ENCODE measurements at regions of chr1 and their contacts with region 1.

Region 1: DNA sequence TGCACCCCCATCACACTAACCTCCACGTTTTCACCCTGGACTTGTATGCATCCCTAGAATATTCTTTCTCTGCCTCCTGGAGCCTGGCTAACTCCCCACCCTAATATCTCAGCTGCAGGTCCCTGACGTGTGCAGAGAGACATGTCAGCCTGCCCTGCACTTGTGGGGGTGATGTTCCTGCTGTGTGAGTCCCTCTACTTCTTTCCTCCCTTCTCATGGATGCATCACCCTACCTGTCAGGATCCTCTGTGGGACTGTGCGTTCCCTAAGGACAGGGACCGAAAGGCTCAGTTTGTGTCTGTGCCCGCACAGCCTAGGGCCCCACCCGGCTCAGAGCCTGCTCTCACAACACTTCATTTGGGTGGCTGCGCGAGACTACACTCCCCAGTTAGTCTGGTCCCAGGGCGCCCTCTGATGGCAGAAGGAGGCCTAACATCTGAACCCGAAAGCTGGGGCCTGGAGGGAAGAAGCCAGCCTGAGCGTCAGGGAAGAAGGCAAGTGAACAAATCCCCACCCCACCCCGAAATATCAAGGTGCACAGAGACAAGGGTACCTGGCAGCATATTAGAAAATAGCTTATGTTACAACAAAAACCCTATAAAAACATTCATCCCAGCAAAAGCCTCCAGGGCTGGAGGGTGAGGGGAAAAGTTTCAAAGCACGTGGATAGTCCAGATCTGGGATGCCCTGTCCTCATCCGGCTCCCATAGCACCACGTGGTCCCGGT is 3.7 kb downstream of the CD52 start:
- DNase-seq: peak; percentile 99
- H3K4me3 Mint-ChIP-seq: peak overlapping the region; percentile 65
- H3K27ac Mint-ChIP-seq: peak overlapping the region; percentile 90
- H3K4me1 Mint-ChIP-seq: peaks cover 44% of the 10 kb centered on the region
- H3K27me3 Mint-ChIP-seq: no peaks in the 10 kb centered on the region

Region 2: DNA sequence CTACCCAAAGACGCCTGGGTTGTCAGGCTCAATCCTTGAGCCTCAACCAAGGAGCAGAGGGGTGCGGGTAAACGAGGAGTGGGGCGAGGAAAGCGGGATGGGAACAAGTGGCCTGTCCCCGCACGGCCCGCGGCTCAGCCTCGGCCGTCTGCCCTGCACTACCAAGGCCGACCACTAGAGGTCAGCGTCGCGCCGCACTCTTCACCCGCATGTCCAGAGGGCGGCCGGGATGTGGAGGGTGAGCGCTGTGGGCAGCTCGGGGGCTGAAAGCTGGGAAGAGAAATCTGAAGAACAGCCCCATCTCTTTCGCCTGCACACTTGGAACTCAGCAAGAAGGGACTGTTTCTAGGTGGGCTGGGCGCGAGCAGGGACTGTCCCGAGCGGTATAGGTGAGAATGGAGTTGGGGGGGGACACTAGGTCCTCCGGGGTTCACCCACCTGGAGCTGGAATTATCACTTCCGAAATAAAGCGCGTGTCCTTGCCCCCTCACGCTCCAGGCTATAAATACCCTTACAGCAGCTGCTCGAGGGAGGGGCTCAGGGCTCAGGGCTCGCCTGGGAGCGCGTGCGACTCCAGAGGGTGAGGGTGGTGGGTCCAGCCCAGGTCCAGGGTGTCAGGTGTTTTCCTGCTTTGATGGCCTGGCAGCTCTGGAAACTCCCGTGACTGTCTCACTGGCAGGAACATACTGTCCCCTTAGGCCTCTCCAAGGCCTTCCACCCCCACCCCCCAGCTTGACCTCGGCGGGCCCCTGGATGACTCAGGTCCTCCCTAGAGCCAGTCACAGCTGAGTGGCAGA is 285.3 kb before region 1 on chr1:
- CTCF ChIA-PET with region 1: no interaction called
- intact Hi-C with region 1: loop called (anchors 5 kb)
- DNase-seq: peak; percentile 78
- H3K4me3 Mint-ChIP-seq: peak overlapping the region; percentile 88
- H3K27ac Mint-ChIP-seq: no peak overlapping the region
- H3K4me1 Mint-ChIP-seq: peaks cover 13% of the 10 kb centered on the region
- H3K27me3 Mint-ChIP-seq: peaks cover 3% of the 10 kb centered on the region

Region 3: DNA sequence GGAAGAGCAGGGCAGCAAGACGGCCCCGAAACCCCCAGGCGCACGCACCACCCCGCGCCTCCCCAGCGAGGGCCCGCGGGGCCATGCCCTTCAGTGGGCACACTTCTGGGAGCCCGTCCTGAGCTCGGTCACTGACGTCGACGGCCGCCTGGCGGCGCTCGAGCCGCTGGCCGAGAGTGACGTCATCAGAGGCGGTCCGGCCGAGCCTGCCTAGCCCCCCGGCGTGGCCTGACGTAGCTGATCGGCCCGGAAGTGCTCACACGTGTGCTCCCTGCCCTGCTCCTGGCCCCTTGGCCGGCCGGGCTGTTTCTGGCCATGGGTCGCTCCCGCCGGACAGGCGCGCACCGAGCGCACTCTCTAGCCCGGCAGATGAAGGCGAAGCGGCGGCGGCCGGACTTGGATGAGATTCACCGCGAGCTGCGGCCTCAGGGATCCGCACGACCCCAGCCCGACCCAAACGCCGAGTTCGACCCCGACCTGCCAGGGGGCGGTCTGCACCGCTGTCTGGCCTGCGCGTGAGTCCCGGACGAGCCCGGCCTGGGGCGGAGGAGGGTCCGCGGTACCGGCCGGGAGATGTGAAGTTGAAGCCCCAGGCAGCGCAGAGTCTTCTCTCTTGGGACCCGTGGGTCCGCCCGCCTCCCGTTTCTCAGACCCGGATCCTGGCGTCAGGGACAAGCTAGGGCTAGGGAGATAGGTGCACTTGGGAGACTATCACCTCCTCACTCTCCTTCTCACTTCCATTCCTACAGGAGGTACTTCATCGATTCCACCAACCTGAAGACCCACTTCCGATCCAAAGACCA is 151.6 kb before region 1 on chr1 and contains the start of gene ZNF593:
- CTCF ChIA-PET with region 1: interaction called, 12 read pairs
- intact Hi-C with region 1: loop called (anchors 1 kb)
- DNase-seq: peak; percentile 89
- H3K4me3 Mint-ChIP-seq: peak within 1 kb of the TSS; percentile 78
- H3K27ac Mint-ChIP-seq: peak within 1 kb of the TSS; percentile 60
- H3K4me1 Mint-ChIP-seq: peaks cover 8% of the 10 kb centered on the region
- H3K27me3 Mint-ChIP-seq: no peaks in the 10 kb centered on the region
- total RNA-seq, gene ZNF593: 24.0 to 26.8 TPM

Region 4: DNA sequence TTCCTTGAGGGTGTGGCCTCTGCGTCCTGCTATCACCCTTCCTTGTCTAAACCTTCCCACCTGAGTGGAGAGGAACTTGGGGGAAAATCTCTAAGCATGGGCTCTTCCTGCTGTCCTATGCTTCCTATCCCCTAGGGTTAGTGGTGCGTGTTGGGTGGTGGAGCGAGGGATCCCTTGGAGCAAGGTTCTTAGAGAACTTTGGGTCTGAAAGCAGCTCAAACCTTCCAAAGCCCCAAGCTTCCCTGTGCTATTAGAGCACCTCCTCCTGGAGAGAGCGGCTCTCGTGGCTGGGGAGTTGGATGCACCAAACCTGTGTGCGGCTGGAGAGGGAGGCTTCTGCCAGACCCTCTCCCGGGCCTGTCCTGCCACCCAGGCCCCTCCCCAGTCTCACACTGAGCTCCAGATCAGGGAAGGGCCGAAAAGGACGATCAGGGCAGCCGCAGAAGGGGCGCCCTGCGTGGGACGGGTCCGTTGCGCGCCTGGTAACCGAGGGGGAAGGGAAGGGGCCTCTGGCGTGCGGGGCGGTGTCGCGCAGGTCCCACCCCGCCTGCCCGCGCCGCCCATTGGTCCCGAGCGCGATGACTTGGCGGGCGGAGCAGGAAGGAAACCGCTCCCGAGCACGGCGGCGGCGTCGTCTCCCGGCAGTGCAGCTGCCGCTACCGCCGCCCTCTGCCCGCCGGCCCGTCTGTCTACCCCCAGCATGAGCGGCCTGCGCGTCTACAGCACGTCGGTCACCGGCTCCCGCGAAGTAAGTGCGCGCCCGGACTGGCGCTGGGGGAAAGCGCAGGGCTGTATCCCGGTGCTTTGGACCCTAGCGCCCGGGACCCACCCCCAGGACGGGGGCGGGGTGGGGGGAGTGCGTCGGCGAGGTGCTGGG is 41.8 kb before region 1 on chr1 and contains the start of gene SH3BGRL3:
- CTCF ChIA-PET with region 1: interaction called, 210 read pairs
- intact Hi-C with region 1: loop called (anchors 1 kb)
- DNase-seq: peak; percentile 86
- H3K4me3 Mint-ChIP-seq: peak within 1 kb of the TSS; percentile 81
- H3K27ac Mint-ChIP-seq: peak within 1 kb of the TSS; percentile 87
- H3K4me1 Mint-ChIP-seq: peaks cover 87% of the 10 kb centered on the region
- H3K27me3 Mint-ChIP-seq: no peaks in the 10 kb centered on the region
- total RNA-seq, gene SH3BGRL3: 130 to 132 TPM

Region 5: DNA sequence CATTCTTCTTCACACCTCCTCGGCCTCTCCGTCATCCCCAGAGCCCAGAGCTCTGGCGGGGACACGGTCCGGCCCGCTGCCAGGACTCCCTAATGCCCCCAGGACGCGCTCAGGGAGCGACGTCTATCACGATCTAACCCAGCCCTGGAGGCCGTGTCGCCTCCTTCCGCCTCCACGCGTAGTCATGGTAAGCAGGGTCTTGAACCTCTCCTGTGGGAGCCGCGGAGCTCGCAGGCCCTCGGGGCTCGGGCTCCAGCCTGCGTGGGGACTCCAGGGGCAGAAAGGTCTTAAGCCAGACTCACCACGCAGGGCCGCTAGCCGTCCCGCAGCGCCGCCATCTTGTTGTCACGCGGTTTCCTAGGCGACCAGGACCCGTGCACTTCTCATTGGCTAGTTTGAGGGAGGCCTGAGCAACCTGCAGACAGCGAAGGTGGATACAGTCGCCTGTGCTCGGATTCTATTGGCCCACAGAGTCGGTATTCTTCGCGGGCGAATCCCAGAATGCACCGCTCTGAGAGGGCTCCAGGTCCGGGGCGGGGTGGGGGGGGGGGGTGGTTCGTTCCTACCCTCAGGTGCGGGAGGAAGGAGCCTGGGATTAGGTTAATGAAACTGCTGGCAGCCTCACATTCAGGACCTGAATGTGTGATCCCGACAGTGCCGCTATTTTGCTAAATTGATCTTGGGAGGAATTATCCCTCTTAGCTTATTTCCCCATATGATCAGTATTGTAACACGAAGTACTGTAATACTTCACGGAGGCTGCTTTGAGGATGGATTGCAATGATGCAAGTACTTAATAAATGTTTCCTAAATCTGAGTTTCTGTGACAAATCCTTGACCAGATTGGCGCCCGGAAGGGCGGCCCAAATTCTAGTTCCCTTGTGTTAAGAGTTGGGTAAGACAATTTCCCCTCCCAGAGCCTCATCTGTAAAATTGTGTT is 14.9 kb before region 1 on chr1 and contains the start of gene UBXN11:
- CTCF ChIA-PET with region 1: interaction called, 32 read pairs
- intact Hi-C with region 1: loop called (anchors 1 kb)
- DNase-seq: peak; percentile 98
- H3K4me3 Mint-ChIP-seq: peak within 1 kb of the TSS; percentile 99
- H3K27ac Mint-ChIP-seq: peak within 1 kb of the TSS; percentile 97
- H3K4me1 Mint-ChIP-seq: peaks cover 38% of the 10 kb centered on the region
- H3K27me3 Mint-ChIP-seq: no peaks in the 10 kb centered on the region
- total RNA-seq, gene UBXN11: 26.4 to 26.9 TPM

Region 6: GRCh38 chr1:26404631-26405030 is 83.2 kb after region 1 on chr1:
- CTCF ChIA-PET with region 1: no interaction called
- intact Hi-C with region 1: no loop called
- DNase-seq: no peak
- H3K4me3 Mint-ChIP-seq: no peak overlapping the region
- H3K27ac Mint-ChIP-seq: no peak overlapping the region
- H3K4me1 Mint-ChIP-seq: peaks cover 13% of the 10 kb centered on the region
- H3K27me3 Mint-ChIP-seq: peaks cover 21% of the 10 kb centered on the region

Region 7: GRCh38 chr1:26472901-26473845 is 151.7 kb after region 1 on chr1:
- CTCF ChIA-PET with region 1: interaction called, 3 read pairs
- intact Hi-C with region 1: loop called (anchors 5 kb)
- DNase-seq: peak; percentile 96
- H3K4me3 Mint-ChIP-seq: peak overlapping the region; percentile 87
- H3K27ac Mint-ChIP-seq: peak overlapping the region; percentile 71
- H3K4me1 Mint-ChIP-seq: peaks cover 49% of the 10 kb centered on the region
- H3K27me3 Mint-ChIP-seq: no peaks in the 10 kb centered on the region

Region 8: GRCh38 chr1:26959722-26960615 is 638.5 kb after region 1 on chr1 and contains the start of gene KDF1:
- CTCF ChIA-PET with region 1: no interaction called
- intact Hi-C with region 1: no loop called
- DNase-seq: peak; percentile 39
- H3K4me3 Mint-ChIP-seq: peak within 1 kb of the TSS; percentile 64
- H3K27ac Mint-ChIP-seq: no peak within 1 kb of the TSS
- H3K4me1 Mint-ChIP-seq: peaks cover 8% of the 10 kb centered on the region
- H3K27me3 Mint-ChIP-seq: peaks cover 17% of the 10 kb centered on the region
- total RNA-seq, gene KDF1: 0.24 to 0.25 TPM